ENCODE measurements at regions of chr19 and their contacts with region 1.

Region 1: GRCh38 chr19:49327878-49328544 is 3.0 kb upstream of the SLC6A16 start:
- DNase-seq: peak; percentile 30
- H3K4me3 Mint-ChIP-seq: no peak overlapping the region
- H3K27ac Mint-ChIP-seq: peak overlapping the region; percentile 63
- H3K4me1 Mint-ChIP-seq: peaks cover 30% of the 10 kb centered on the region
- H3K27me3 Mint-ChIP-seq: no peaks in the 10 kb centered on the region

Region 2: DNA sequence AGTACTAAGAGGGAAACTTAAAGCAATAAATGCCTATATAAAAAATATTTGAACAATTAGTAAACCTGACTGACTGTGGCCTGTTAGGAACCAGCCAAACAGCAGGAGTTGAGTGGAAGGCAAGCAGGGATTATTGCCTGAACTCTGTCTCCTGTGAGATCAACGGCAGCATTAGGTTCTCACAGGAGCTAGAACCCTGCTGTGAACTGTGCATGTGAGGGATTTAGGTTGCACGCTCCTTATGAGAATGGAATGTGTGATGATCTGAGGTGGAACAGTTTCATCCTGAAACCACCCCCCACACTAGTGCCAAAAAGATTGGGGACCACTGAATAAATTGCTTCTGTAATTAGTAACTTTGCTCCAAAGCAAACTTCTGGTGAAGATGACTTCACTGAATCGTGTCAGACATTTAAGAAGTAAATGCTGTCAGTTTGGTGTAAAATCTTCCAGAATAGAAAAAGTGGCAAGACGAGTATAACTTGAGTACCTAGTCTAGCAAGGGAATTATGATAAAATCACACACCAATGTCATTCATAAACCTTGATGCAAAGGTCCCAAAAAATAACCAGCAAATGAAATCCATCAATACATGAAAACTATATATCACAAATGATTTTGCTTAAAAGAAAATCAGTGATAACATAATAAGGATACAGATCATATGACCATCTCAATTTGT is 56.8 kb before region 1 on chr19:
- intact Hi-C with region 1: loop called (anchors 1 kb)
- DNase-seq: no peak
- H3K4me3 Mint-ChIP-seq: no peak overlapping the region
- H3K27ac Mint-ChIP-seq: no peak overlapping the region
- H3K4me1 Mint-ChIP-seq: peaks cover 3% of the 10 kb centered on the region
- H3K27me3 Mint-ChIP-seq: peaks cover 12% of the 10 kb centered on the region

Region 3: GRCh38 chr19:49403404-49404187 is 75.6 kb after region 1 on chr19:
- intact Hi-C with region 1: no loop called
- DNase-seq: no peak
- H3K4me3 Mint-ChIP-seq: no peak overlapping the region
- H3K27ac Mint-ChIP-seq: no peak overlapping the region
- H3K4me1 Mint-ChIP-seq: peaks cover 26% of the 10 kb centered on the region
- H3K27me3 Mint-ChIP-seq: peaks cover 2% of the 10 kb centered on the region

Region 4: DNA sequence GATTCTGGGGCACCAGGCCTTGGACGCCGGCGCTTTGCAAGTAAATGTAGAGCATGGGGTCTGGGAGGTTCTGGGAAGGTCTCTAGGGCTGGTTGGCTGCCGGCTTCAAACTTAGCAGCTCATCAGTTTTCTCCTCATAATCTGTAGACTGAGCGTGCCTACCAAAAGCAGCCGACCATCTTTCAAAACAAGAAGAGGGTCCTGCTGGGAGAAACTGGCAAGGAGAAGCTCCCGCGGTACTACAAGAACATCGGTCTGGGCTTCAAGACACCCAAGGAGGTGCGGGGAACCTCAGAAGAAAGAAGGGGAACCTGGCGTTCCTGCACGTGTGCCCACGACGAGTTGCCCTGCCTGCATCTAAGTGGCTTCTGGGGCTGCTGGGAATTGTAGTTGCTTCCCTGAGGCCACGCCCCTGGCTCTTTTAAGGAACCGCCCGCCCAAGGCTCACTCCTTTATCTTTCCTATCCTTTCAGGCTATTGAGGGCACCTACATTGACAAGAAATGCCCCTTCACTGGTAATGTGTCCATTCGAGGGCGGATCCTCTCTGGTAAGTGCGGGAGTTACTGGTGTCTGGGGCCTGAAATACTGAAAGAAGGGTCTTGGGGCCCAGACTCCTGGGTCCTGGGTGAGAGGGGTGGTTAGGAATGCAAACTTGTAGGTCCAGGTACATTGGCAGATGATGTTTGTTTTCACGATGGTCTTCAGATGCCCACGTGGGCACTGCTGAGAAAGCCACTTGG is 169.2 kb after region 1 on chr19:
- intact Hi-C with region 1: no loop called
- DNase-seq: peak; percentile 73
- H3K4me3 Mint-ChIP-seq: peak overlapping the region; percentile 98
- H3K27ac Mint-ChIP-seq: peak overlapping the region; percentile 94
- H3K4me1 Mint-ChIP-seq: peaks cover 44% of the 10 kb centered on the region
- H3K27me3 Mint-ChIP-seq: no peaks in the 10 kb centered on the region